ENCODE measurements at regions of chr1 and their contacts with region 1.

Region 1: DNA sequence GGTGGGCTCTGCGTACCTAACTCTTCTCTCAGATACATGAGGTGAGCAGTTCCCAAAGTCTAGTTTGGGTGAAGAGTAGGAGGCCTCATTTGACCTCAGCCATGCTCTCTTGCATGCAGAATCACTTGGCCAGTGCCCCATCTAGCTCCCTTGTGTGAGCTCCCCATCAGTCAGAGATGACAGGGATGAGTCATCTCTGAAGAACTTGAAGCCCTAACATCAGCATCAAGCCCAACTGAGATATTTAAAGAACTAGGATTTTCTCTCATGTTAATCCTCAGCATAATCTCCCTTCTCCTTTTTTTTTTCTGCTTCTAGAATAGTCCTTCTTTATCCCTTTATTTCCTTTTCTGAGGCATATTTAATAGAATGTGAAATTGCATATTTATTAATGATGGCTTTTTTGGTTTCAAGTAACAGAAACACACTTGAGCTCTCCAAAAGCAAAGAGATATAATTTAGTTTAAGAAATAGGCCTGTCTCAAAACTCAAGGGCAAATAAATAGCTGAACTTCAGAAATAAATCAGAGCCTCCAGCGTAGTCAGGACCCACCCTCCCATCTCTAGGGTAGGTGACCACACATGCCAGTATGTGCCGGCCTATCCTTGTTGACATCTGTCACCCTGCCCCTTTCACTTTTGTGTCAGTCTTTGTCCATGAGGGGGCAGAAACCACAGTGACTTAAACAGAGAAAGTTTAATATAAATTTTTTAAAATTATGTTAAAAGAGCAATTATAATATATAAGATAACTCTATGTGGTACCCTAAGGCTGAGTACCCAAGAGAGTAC is 112.3 kb downstream of the TSEN15 start:
- DNase-seq: peak in 5 of 7 donors; percentile 36 to 60 (median 49)
- H3K4me3 ChIP-seq: no peak overlapping the region
- H3K27ac ChIP-seq: no peak overlapping the region
- H3K4me1 ChIP-seq: peaks cover 12 to 25% of the 10 kb centered on the region in 2 donors
- H3K27me3 ChIP-seq: no peaks in the 10 kb centered on the region
- CTCF ChIP-seq: no peak
- POLR2A ChIP-seq: no peak

Region 2: GRCh38 chr1:184093071-184093470 is 70.8 kb before region 1 on chr1:
- intact Hi-C with region 1: loop called in 1 of 2 experiments (anchors 10 kb)
- DNase-seq: no peak
- H3K4me3 ChIP-seq: no peak overlapping the region
- H3K27ac ChIP-seq: no peak overlapping the region
- H3K4me1 ChIP-seq: no peaks in the 10 kb centered on the region
- H3K27me3 ChIP-seq: no peaks in the 10 kb centered on the region
- CTCF ChIP-seq: no peak
- POLR2A ChIP-seq: no peak